Cardiac septum (tissue), 1 donor: ENCODE measurements at regions of chr6 and their contacts with region 1.

Region 1: GRCh38 chr6:169751242-169752073 is at the starts of genes DYNLT2 and ERMARD:
- DNase-seq: peak; percentile 96
- total RNA-seq, gene DYNLT2: 0.83 TPM
- total RNA-seq, gene ERMARD: 11.3 TPM

Region 2: DNA sequence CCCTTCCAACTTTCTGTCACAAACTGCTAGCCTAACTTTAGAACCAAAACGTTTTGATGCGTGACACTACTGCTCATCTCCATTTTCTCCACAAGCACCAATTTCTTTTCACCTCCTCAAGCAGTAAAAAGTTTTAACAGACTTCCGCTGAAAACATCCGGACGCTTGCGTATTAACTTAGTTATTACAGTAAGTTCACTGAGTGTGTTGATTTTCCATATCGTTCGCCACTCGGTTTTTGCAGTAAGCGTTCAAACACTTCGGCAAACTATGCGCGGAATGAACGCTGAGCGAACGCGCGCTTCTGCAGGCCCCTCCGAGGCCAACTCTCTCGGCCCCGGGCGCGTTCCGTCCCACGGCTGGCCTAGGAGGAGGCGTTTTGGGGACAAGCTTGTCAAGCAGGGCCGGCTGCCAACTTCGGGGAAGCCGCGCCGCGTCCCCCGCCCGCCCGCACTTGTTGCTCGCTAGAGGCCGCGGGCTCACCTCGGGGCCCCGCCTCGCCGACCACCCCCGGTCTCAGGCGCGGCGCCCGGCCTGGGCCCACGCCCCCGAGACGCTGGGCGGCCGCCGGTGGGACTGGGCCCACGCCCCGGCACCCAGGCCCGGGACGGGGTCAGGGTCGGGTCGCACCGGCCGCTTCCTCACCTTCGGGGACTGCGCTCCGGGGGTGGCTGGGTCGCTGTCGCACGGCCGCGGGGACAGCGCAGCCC is 28.1 kb before region 1 on chr6:
- intact Hi-C with region 1: loop called (anchors 1 kb)
- DNase-seq: peak; percentile 89

Region 3: DNA sequence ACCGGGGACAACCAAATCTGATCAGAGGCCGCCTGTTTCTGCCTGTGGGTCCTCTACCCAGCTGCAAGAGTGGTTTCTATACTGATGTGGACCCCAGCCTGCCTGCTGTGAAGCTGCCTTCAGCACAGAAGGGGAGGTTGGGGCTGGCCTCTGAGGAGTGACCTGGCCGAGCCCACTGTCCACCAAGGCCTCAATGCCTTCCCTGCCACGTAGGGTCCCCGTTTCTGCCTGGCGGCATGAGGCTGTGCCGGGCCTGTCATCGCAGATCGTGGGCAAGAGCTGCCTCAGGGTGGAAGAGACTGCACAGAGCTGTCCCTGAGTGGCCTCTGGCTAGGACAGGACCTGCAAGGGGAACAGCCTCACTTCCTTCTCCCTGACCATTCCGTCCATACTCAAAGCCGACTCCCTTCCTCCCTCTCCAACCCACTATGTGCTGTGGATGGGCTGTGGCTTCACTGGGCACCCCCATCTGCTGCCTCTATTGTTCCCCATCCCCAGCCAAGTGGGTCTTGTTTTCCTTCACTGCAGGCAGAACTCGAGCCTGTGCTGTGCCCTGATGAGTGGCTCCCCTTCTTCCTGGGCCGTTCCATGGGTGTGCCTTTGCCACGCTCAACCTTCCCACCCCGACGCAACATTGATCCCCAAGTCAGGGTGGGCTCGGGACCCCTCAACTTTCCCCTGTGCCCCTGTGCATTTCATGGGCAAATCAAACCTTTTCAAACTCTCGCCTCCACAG is 60.2 kb after region 1 on chr6:
- intact Hi-C with region 1: no loop called
- DNase-seq: no peak